BJ (cell line): ENCODE measurements at regions of chr6 and their contacts with region 1.

Region 1: GRCh38 chr6:26087284-26088115 is at the start of gene HFE:
- DNase-seq: no peak
- H3K4me3 ChIP-seq: peak within 1 kb of the TSS; percentile 46
- H3K27me3 ChIP-seq: no peaks in the 10 kb centered on the region
- CTCF ChIP-seq: peak; percentile 38
- polyA plus RNA-seq, gene HFE: 23.5 and 24.3 TPM in 2 replicates

Region 2: GRCh38 chr6:25942561-25943147 is 144.8 kb before region 1 on chr6:
- CTCF ChIA-PET with region 1: no interaction called
- POLR2A ChIA-PET with region 1: no interaction called
- DNase-seq: no peak
- H3K4me3 ChIP-seq: no peak overlapping the region
- H3K27me3 ChIP-seq: no peaks in the 10 kb centered on the region
- CTCF ChIP-seq: peak; percentile 38

Region 3: DNA sequence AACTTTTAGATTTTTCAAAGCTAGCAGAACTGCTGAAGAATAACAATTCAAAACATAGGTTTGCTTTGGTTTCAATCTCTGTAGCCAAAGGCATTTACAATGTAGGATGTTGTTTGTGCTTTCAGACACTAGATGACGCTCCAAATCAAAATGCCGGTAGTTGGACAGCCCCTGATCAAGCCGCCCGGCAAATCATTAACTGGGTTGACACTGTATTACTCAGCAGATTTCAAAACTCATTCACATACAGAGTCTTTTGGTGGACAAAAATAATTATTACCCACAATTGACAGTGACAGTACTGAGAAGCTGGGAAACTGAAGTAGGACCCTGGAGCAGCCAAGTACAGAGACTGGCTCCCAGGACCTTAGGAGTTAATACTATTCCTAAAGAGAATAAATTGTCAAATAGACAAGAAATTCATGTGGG is 21.5 kb before region 1 on chr6:
- CTCF ChIA-PET with region 1: interaction called, 543 read pairs
- POLR2A ChIA-PET with region 1: no interaction called
- DNase-seq: no peak
- H3K4me3 ChIP-seq: no peak overlapping the region
- H3K27me3 ChIP-seq: no peaks in the 10 kb centered on the region
- CTCF ChIP-seq: peak; percentile 89